ENCODE measurements at regions of chr6 and their contacts with region 1.

Region 1: DNA sequence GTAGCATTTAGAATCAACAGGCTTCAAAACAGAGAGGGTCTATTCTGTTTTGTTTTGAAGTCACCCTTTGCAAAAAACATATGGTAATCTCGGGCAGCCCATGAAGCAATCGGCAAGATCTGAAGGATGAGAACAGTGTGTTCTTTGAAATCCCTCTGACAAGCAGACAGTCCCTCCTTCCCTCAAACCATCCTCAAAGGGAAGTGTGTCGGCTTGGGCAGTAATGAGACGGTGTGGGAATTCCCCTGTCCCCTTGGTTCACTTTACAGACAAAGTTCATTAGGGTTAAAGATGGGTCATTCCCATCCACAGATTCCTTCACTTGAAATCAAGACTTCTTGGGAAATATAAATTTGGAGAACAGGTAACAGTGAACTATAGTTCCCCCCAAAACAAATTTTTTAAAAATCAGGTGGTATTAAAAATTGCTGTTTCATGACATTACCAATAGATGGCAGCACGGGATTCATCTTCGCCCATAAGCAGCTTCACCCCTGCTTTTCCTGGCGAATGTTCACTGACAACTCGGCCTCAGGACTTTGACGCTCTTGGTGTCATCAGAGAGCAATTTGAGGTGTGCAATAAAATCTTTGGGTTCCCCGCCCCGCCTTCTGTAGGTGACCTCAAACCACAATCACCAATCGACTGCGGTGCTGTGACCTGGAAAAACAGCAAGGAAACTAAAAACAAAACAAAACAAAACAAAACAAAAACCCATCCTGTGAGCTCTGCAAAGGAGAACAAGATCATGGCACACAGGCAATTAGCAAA is 159.3 kb upstream of the TNFAIP3 start:
- DNase-seq: peak; percentile 73 to 88
- H3K4me3 ChIP-seq: no peak overlapping the region
- H3K4me3 Mint-ChIP-seq: peak overlapping the region; percentile 62
- H3K27ac Mint-ChIP-seq: peak overlapping the region; percentile 89
- H3K4me1 ChIP-seq: peaks cover 22% of the 10 kb centered on the region
- H3K4me1 Mint-ChIP-seq: peaks cover 36% of the 10 kb centered on the region
- H3K27me3 ChIP-seq: no peaks in the 10 kb centered on the region
- H3K27me3 Mint-ChIP-seq: no peaks in the 10 kb centered on the region
- CTCF ChIP-seq: peak; percentile 67 to 80

Region 2: DNA sequence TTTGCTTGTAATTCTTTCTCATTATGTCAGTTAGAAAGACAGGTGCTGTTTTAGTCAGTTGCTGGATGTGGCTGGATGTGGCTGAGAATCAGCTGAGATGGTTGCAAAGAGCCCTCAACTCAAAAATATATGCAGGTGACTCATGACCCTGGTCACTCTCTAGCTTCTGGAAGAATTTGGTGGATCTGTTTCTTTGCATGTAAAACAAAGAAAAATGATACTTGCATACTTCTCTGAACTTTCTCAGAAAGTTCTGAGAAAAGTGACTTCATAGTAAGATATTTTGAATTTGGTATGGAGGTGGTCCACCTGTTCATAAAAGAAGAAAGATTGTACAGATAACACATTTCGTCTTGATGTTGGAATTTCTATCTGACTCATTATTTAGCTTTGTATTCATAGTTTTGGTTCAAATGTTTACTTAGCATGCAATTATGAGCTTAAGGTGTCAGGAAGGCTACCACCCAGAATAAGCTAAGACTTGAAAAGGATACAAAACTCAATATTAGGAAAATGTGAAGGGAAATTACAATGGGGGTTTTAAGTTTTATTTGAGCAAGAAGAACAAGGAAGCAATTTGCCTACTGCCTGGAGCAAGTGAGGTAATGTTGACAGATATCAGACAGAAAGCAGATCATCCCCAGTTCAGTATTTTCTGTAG is 50.3 kb before region 1 on chr6:
- CTCF ChIA-PET with region 1: no interaction called
- POLR2A ChIA-PET with region 1: no interaction called
- intact Hi-C with region 1: no loop called
- DNase-seq: no peak
- H3K4me3 ChIP-seq: no peak overlapping the region
- H3K4me3 Mint-ChIP-seq: peak overlapping the region; percentile 65
- H3K27ac Mint-ChIP-seq: peak overlapping the region; percentile 90
- H3K4me1 ChIP-seq: peaks cover 60% of the 10 kb centered on the region
- H3K4me1 Mint-ChIP-seq: peaks cover 17% of the 10 kb centered on the region
- H3K27me3 ChIP-seq: no peaks in the 10 kb centered on the region
- H3K27me3 Mint-ChIP-seq: no peaks in the 10 kb centered on the region
- CTCF ChIP-seq: no peak

Region 3: GRCh38 chr6:137794516-137795201 is 86.9 kb after region 1 on chr6:
- CTCF ChIA-PET with region 1: interaction called, 7 read pairs
- POLR2A ChIA-PET with region 1: no interaction called
- intact Hi-C with region 1: loop called (anchors 2 kb)
- DNase-seq: peak; percentile 63 to 70
- H3K4me3 ChIP-seq: no peak overlapping the region
- H3K4me3 Mint-ChIP-seq: peak overlapping the region; percentile 53
- H3K27ac Mint-ChIP-seq: peak overlapping the region; percentile 87
- H3K4me1 ChIP-seq: peaks cover 69% of the 10 kb centered on the region
- H3K4me1 Mint-ChIP-seq: peaks cover 45% of the 10 kb centered on the region
- H3K27me3 ChIP-seq: no peaks in the 10 kb centered on the region
- H3K27me3 Mint-ChIP-seq: no peaks in the 10 kb centered on the region
- CTCF ChIP-seq: no peak

Region 4: GRCh38 chr6:137944793-137945498 is 237.2 kb after region 1 on chr6:
- CTCF ChIA-PET with region 1: interaction called, 6 read pairs
- POLR2A ChIA-PET with region 1: no interaction called
- intact Hi-C with region 1: loop called (anchors 1 kb)
- DNase-seq: peak in 1 of 2 experiments; percentile 29
- H3K4me3 ChIP-seq: no peak overlapping the region
- H3K4me3 Mint-ChIP-seq: no peak overlapping the region
- H3K27ac Mint-ChIP-seq: no peak overlapping the region
- H3K4me1 ChIP-seq: 0 out of 2 replicates have a peak, but pooled peaks cover 3% of the 10 kb centered on the region
- H3K4me1 Mint-ChIP-seq: peaks cover 8% of the 10 kb centered on the region
- H3K27me3 ChIP-seq: no peaks in the 10 kb centered on the region
- H3K27me3 Mint-ChIP-seq: no peaks in the 10 kb centered on the region
- CTCF ChIP-seq: peak; percentile 62 to 63

Region 5: GRCh38 chr6:138001750-138002349 is 294.1 kb after region 1 on chr6:
- CTCF ChIA-PET with region 1: interaction called, 4 read pairs
- POLR2A ChIA-PET with region 1: no interaction called
- intact Hi-C with region 1: loop called (anchors 1 kb)
- DNase-seq: peak; percentile 53 to 69
- H3K4me3 ChIP-seq: no peak overlapping the region
- H3K4me3 Mint-ChIP-seq: no peak overlapping the region
- H3K27ac Mint-ChIP-seq: no peak overlapping the region
- H3K4me1 ChIP-seq: peaks cover 2% of the 10 kb centered on the region; the same call in 1 of the 2 replicates
- H3K4me1 Mint-ChIP-seq: peaks cover 9% of the 10 kb centered on the region
- H3K27me3 ChIP-seq: no peaks in the 10 kb centered on the region
- H3K27me3 Mint-ChIP-seq: no peaks in the 10 kb centered on the region
- CTCF ChIP-seq: peak; percentile 87